Right ventricle myocardium inferior (tissue), 1 donor: ENCODE measurements at regions of chr18 and their contacts with region 1.

Region 1: GRCh38 chr18:1585879-1586488 is 681.3 kb downstream of the ADCYAP1 start:
- DNase-seq: no peak
- ATAC-seq: no peak

Region 2: DNA sequence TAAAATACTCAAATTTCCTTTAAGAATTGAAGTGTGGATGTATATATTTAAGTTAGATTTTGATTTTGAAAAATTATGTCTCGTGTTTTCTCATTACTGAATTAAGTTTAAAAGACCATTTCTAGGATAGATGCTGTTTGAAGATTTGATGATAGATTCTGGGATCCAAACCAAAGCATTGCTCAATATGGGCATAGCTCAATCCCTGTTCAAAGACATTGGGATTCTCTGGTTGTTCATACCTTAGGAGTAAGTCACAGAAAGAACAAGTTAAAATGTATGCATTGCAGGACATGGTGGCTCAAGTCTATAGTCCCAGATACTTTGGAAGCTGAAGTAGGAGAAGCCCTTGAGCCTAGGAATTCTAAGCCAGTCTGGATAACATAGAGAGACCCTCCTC is 59.0 kb before region 1 on chr18:
- intact Hi-C with region 1: no loop called
- DNase-seq: no peak
- ATAC-seq: no peak

Region 3: DNA sequence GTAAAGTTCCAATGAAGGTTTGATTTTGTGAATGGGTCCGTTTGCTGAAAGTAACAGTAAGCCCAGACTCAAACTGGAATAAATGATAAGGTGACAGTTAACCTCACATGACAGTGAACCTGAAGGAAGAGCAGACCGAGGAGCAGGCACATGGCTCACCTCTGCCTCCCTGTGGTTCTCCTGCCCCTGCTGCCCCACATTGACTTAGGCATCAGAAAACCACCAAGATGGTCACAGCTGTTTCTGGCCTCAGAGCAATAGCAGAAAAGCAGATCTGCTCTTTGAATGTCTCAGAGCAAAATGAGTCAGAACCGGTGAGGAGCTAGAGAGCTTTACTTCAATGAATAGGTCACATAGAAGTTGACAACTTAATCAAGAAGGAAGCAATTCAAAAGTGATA is 497.7 kb after region 1 on chr18:
- intact Hi-C with region 1: loop called (anchors 5 kb)
- DNase-seq: no peak
- ATAC-seq: no peak

Region 4: GRCh38 chr18:2223849-2224248 is 637.9 kb after region 1 on chr18:
- intact Hi-C with region 1: loop called (anchors 10 kb)
- DNase-seq: no peak
- ATAC-seq: peak; percentile 39